ENCODE measurements at regions of chr5 and their contacts with region 1.

Region 1: DNA sequence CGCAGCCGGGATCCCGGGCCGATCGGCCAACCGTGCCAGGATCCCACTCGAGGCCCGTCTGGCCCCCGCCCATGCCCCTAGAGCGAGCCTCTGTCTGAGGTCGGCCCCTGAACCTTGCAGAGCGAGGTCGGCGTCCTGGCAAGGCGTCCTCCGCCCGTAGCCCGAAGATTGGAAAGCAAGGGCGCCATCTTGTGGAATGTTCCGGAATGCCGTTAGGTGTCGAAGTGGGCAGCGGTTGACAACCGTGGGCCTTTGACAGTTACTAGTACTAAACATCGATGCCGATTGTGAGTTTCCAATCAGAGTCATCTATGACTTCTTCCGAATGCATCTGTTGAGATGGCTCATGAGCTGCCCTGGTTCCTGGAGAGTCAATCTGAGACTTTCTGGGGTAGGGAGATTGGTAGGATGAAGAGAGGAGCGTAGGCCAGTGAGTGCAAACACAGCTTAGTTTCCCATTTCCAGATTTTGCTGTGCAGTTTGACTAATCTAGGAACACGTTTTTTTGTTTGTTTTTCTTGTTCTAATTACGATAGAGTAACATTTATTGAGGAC is 923 bp upstream of the PLK2 start:
- DNase-seq: peak; percentile 83 to 97 (median 92)

Region 2: DNA sequence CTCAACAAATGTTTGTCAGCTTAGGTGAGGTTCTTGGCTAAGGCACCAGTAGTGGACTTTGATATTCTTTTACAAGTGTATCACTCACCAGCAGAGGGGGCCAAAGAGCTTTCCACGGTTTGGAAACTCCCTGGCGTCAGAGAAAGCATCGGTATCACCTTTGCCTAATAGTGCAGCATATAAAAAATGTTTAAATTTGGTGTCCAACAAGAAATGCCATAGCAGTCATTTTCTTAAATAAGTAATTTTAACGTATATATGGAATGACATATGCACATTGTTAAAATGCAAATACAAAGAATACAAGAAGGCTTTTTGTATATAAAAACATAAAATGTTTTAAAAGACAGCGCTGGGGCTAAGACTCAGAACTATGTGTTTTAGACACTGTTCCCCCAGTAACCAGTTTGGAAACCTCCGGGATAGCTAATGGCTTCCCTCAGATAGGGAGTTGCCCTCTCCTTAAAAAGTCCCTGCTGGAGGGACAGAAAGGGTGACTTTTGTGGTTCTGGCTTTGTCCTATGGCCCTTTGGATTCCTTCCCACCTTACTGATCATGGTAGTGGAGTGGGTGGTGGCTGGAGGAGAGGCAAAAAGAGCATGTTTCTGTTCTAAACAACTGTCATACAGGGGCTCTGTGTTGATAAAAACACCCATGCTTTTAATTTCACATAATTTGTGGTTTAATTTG is 1162.4 kb before region 1 on chr5:
- intact Hi-C with region 1: loop called (anchors 1 kb)
- DNase-seq: peak; percentile 59 to 96 (median 86)

Region 3: DNA sequence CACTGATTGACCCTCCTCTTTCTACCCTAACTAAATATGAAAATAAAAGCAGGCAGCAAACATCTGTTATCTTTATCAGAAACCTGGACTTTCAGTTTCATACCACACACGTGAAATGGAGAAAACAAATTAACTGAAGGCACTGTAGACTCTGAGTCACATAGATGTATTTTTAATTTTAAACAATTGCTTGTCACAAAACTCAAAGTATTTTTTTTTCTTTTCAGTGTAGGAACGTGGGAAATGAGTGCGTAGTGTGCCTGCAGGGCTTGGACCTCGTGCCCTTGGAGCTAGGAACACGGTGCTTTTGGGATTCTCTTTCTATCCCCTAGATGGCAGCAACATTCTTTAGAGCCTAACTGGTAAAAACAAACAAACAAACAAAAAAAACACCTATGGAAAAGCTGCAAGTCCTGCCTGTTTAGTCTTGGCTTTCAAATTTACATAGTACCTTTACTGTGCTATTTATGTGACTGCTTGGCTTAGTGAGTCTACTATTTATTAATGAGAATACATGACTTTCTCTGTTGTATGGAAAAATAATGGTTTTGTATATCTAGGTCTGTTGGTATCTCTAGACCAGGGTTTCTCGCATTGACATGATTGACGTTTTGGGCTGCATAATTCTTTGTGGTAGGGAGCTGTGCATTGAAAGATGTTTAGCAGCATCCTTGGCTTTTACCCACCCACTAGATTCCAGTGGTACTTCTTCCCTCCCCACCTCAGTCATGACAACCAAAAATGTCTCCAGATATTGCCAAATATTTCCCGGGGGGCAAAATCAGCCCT is 961.4 kb before region 1 on chr5:
- intact Hi-C with region 1: loop called (anchors 2 kb)
- DNase-seq: peak in 32 of 42 donors; percentile 10 to 76 (median 44)

Region 4: GRCh38 chr5:57779383-57780223 is 681.2 kb before region 1 on chr5:
- intact Hi-C with region 1: loop called (anchors 2 kb)
- DNase-seq: peak in 35 of 42 donors; percentile 9 to 81 (median 57)

Region 5: DNA sequence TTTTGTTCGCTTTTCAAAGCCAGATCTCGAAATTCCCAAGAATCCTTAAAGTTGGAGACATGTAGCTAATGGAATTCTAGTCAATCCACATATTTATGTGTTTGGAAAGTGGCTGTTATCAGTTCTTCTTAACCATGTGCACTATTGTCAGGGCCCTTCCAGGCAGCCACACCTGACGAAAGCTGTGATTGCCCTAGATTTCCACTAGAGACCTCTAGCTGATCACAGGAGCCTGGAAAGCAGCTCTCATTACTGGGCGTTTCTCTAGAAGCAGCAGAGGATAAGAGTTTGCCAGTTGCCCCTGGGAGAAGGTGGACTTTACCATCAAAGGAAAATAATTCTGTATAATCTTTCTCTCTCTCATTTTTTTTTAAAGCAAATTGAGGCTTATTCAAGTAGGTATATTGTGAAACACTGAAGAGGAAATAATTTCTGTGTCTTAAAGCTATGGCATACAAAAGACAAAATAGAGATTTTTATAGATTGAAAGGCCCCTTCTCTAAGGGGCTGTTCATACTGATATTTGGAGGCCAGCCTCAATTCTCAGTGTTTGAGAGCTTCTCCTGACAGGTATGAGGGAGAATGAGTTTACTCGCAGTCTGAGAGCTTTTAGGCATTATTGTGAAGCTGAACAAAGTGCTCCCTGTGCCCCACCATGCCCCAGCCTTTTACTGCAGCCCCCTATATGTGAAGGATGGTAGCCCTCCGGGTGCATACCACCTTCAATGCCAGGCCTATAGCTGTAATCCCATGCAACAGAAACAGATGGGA is 572.8 kb before region 1 on chr5:
- intact Hi-C with region 1: loop called (anchors 10 kb)
- DNase-seq: peak in 28 of 42 donors; percentile 22 to 84 (median 53)

Region 6: DNA sequence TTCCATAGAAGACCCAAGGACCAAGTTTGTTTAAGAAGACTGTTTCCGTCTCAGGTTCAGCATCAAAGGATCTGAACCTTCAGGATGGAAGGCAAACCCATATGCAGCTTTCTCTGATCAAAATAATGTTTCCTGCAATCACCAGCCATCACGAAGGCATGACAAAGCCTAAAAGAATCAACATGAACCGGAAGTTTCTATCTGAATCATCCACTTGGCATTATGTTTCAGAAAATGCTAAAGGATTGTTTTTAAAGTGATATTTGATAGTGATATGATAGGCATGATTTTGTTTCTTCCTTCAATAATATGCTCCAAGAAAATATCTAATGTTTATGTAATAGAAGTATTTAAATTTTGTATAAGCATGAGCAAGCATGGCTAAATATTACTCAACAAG is 220.5 kb before region 1 on chr5:
- intact Hi-C with region 1: loop called (anchors 10 kb)
- DNase-seq: no peak

Region 7: DNA sequence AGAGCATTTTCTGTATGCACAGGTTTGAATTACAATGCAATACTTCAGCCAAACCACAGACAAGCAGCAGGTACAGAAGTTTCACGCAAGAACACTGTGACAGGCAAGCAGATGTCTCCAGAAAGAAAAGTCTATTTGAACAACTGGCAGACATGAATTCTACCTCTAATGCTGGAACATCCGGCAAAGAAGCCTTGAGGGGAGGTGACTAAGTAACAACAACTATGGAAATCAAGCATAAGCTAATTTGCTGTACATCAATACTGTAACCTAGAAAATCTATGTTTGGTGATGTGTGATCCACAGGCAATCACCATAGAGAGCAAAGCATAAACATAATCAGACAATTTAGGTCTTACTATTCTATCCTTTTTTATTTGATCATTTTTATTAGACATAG is 66.5 kb before region 1 on chr5:
- intact Hi-C with region 1: no loop called
- DNase-seq: no peak